ENCODE measurements at regions of chr17 and their contacts with region 1.

Region 1: DNA sequence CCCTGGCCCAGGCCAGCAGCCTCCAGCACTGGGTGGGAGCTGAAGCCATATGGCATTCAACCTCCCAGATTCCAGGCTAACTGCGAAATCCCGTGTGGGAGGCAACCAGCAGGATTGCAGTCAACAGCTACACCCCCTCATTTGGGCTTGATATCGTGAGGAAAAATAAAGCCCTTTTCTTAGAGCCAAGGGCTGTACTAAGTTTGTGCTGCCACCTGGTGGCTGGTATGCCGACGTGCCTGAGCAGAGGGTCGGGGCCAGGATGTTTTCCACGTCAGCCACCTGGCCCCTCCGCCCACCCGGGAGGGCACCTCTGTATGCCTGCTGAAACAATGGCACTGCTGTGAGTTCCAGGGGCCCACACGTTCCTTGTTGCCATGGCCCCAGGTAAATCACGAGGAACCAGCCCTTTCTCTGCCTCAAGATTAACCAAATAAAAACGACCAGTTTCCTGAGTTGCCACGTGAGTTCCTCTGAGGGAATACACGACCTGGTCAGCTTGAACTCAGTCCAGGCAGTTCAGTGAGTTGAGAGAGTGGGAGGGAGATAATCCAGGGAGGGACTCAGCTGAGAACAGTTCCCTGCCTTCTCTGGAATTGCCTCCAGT is 9.0 kb downstream of the TMEM98 start:
- DNase-seq: peak; percentile 74 to 86 (median 86)
- H3K4me3 ChIP-seq: peak overlapping the region in 2 of 7 experiments; percentile 27 to 45
- H3K27ac ChIP-seq: no peak overlapping the region
- H3K4me1 ChIP-seq: peaks cover 0 to 22% (median 13%) of the 10 kb centered on the region in 4 experiments
- H3K27me3 ChIP-seq: peaks cover 0 to 2% (median 0%) of the 10 kb centered on the region in 5 experiments

Region 2: DNA sequence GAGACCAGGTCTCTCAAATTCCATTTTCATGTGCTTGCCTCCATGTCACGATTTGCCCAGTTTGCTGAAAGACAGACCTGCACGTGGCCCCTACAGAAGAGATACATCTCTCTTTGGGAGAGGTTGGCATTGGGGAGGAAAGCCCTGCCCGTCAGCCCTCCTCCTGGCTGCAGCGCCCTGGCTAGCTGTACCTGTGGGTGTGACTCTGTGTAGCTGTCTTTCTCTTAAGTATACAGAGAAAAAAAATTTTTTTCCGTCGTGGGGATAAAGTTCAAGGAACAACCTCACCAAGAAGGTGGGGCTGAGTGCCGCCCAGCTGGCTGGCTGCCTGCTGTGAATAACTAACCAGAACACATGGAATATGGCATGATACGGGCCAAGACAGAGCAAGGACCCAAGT is 17.5 kb after region 1 on chr17:
- CTCF ChIA-PET with region 1: interaction called, 10 read pairs
- POLR2A ChIA-PET with region 1: no interaction called
- DNase-seq: no peak
- H3K4me3 ChIP-seq: no peak overlapping the region
- H3K27ac ChIP-seq: no peak overlapping the region
- H3K4me1 ChIP-seq: peaks cover 0 to 4% (median 0%) of the 10 kb centered on the region in 4 experiments
- H3K27me3 ChIP-seq: peaks cover 0 to 2% (median 0%) of the 10 kb centered on the region in 5 experiments

Region 3: GRCh38 chr17:33071656-33072055 is 134.7 kb after region 1 on chr17:
- CTCF ChIA-PET with region 1: no interaction called
- POLR2A ChIA-PET with region 1: no interaction called
- DNase-seq: no peak
- H3K4me3 ChIP-seq: no peak overlapping the region
- H3K27ac ChIP-seq: no peak overlapping the region
- H3K4me1 ChIP-seq: no peaks in the 10 kb centered on the region
- H3K27me3 ChIP-seq: peaks cover 0 to 5% (median 2%) of the 10 kb centered on the region in 5 experiments